ENCODE measurements at regions of chr9 and their contacts with region 1.

Region 1: DNA sequence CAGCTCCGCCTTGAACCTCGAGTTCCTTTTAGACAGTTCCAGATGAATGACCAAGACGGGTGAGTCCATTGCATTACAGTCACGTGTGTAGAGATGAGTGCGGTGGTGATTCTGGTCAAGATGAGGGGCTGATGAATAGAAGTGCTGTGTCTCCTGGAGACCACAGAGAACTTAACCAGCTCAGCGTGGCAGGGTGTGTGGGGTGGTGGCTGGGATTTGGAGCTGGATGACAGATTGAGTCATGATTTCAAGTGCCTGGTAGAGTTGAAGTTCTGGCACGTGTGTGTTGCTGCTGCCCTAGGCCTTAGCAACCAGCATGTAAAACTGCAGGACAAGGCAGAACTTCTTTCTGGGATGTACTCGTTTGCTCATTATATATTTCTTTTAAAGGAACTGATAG is 53.3 kb downstream of the PRRC2B start:
- DNase-seq: no peak
- ATAC-seq: peak in 2 of 4 donors; percentile 33 to 39
- H3K4me3 ChIP-seq: no peak overlapping the region
- H3K27ac ChIP-seq: no peak overlapping the region
- H3K4me1 ChIP-seq: no peaks in the 10 kb centered on the region
- H3K27me3 ChIP-seq: no peaks in the 10 kb centered on the region
- CTCF ChIP-seq: no peak

Region 2: DNA sequence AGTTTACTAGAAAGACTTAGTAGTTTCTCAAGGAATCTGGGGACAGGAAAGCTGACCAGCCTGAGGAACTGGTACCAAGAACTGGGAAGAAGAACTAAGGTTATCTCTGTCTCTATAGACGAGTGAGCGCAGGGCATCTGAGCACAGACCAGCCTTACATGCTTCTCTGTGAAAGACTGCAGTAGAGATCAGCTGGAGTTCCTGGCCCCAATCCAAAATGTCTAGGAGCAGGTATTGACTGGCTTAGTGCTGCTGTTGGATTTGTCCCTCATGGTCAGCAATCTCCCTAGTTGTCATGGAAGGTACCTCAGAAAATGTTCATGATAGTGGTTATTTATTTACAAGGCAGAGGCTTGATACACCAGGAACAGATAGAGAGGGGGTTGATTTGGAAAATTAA is 308.5 kb before region 1 on chr9:
- intact Hi-C with region 1: loop called (anchors 10 kb)
- DNase-seq: no peak
- ATAC-seq: no peak
- H3K4me3 ChIP-seq: no peak overlapping the region
- H3K27ac ChIP-seq: no peak overlapping the region
- H3K4me1 ChIP-seq: no peaks in the 10 kb centered on the region
- H3K27me3 ChIP-seq: no peaks in the 10 kb centered on the region
- CTCF ChIP-seq: no peak

Region 3: GRCh38 chr9:131310833-131311554 is 136.2 kb before region 1 on chr9:
- intact Hi-C with region 1: no loop called
- DNase-seq: peak; percentile 60 to 76
- ATAC-seq: peak; percentile 57 to 72 (median 62)
- H3K4me3 ChIP-seq: no peak overlapping the region
- H3K27ac ChIP-seq: peak overlapping the region; percentile 83
- H3K4me1 ChIP-seq: peaks cover 12% of the 10 kb centered on the region
- H3K27me3 ChIP-seq: no peaks in the 10 kb centered on the region
- CTCF ChIP-seq: no peak

Region 4: GRCh38 chr9:131393622-131394463 is 53.3 kb before region 1 on chr9 and contains the start of gene PRRC2B:
- intact Hi-C with region 1: no loop called
- DNase-seq: peak; percentile 91 to 93
- ATAC-seq: peak; percentile 87 to 89 (median 88)
- H3K4me3 ChIP-seq: peak within 1 kb of the TSS; percentile 76
- H3K27ac ChIP-seq: peak within 1 kb of the TSS; percentile 95
- H3K4me1 ChIP-seq: peaks cover 45% of the 10 kb centered on the region
- H3K27me3 ChIP-seq: no peaks in the 10 kb centered on the region
- CTCF ChIP-seq: peak; percentile 58
- total RNA-seq, gene PRRC2B: 63.6 to 114 (median 78.7) TPM

Region 5: GRCh38 chr9:131478421-131478868 is 31.3 kb after region 1 on chr9:
- intact Hi-C with region 1: no loop called
- DNase-seq: peak; percentile 49 to 60
- ATAC-seq: no peak
- H3K4me3 ChIP-seq: no peak overlapping the region
- H3K27ac ChIP-seq: no peak overlapping the region
- H3K4me1 ChIP-seq: peaks cover 27% of the 10 kb centered on the region
- H3K27me3 ChIP-seq: no peaks in the 10 kb centered on the region
- CTCF ChIP-seq: peak; percentile 50

Region 6: DNA sequence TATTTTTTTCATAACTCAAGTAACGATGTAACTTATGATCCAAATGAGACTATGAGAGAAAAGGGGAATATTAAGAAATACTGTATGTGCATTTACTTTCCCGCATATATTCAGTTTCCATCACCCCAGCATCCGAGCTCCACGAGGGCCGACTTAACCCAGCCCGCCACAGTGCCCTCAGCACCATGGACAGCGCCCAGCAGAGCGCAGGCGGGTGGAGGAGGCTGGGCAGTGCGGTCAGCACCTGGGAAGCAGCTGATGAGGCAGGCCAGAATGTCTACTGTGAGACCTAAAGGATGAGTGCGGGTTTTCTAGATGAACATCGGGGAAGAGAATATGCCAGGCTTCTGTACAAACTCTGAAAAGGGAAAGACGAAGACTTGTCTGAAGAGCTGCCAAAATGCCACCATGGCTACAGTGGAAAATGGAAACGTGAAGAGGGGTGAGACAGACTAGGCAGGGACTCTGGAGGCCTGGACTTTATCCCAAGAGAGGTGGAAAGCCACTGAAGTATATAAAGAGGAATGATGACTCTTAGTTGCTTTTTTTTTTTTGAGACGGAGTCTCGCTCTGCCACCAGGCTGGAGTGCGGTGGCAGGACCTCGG is 667.1 kb after region 1 on chr9:
- intact Hi-C with region 1: no loop called
- DNase-seq: peak; percentile 52 to 71
- ATAC-seq: peak; percentile 72 to 83 (median 77)
- H3K4me3 ChIP-seq: no peak overlapping the region
- H3K27ac ChIP-seq: no peak overlapping the region
- H3K4me1 ChIP-seq: no peaks in the 10 kb centered on the region
- H3K27me3 ChIP-seq: peaks cover 0 to 15% (median 7%) of the 10 kb centered on the region in 3 donors
- CTCF ChIP-seq: no peak

Measured in psoas muscle (tissue), 8 donors.